Dorsolateral prefrontal cortex (tissue), 120 donors: ENCODE measurements at regions of chr19 and their contacts with region 1.

Region 1: GRCh38 chr19:48588670-48589399 is 17.7 kb upstream of the SPACA4 start:
- DNase-seq: peak; percentile 81 to 91 (median 88)
- H3K4me3 ChIP-seq: peak overlapping the region in 57 of 59 donors; percentile 22 to 68 (median 47)
- H3K27ac ChIP-seq: peak overlapping the region in 2 of 59 donors; percentile 19 to 21
- H3K27me3 ChIP-seq: no peaks in the 10 kb centered on the region
- CTCF ChIP-seq: peak; percentile 58 to 93 (median 87)

Region 2: GRCh38 chr19:48271531-48272151 is 317.2 kb before region 1 on chr19:
- intact Hi-C with region 1: loop called in 1 of 2 experiments (anchors 5 kb)
- DNase-seq: peak in 3 of 10 donors; percentile 15 to 38 (median 16)
- H3K4me3 ChIP-seq: peak overlapping the region; percentile 33 to 76 (median 59)
- H3K27ac ChIP-seq: peak overlapping the region in 20 of 59 donors; percentile 6 to 67 (median 41)
- H3K27me3 ChIP-seq: peaks cover 0 to 6% (median 0%) of the 10 kb centered on the region in 45 donors
- CTCF ChIP-seq: peak in 1 of 56 donors; percentile 27

Region 3: GRCh38 chr19:48492925-48493717 is 95.7 kb before region 1 on chr19:
- intact Hi-C with region 1: loop called (anchors 2 to 5 kb)
- DNase-seq: peak; percentile 66 to 93 (median 82)
- H3K4me3 ChIP-seq: peak overlapping the region in 56 of 59 donors; percentile 15 to 67 (median 49)
- H3K27ac ChIP-seq: peak overlapping the region in 18 of 59 donors; percentile 6 to 70 (median 50)
- H3K27me3 ChIP-seq: no peaks in the 10 kb centered on the region
- CTCF ChIP-seq: no peak